RWPE1 (cell line): ENCODE measurements at regions of chr1 and their contacts with region 1.

Region 1: DNA sequence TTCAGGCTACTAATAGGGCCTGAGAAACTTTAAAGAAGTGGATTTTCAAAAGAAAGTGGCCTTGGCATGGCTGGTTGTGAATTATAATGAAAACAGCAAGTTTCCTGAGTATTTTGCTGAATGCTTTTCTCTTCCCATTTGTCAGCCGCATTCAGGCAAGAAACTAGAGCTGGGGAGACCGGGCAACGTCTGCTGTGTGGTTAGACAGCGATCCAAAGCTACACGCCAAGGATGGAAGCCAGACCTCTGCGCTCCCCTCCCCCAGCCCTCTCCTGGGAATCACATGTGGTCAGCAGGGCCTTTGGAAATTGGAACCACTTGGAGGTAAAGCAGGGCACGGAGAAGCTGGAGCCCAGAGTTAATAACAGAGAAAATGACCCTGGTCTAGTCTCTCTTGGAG is 114.1 kb upstream of the CD34 start:
- DNase-seq: no peak
- H3K27ac ChIP-seq: no peak overlapping the region
- CTCF ChIP-seq: no peak

Region 2: GRCh38 chr1:207740224-207740623 is 284.8 kb before region 1 on chr1:
- CTCF ChIA-PET with region 1: interaction called, 10 read pairs
- POLR2A ChIA-PET with region 1: no interaction called
- DNase-seq: peak; percentile 11
- H3K27ac ChIP-seq: no peak overlapping the region
- CTCF ChIP-seq: no peak

Region 3: GRCh38 chr1:208101661-208102431 is 76.8 kb after region 1 on chr1:
- CTCF ChIA-PET with region 1: no interaction called
- POLR2A ChIA-PET with region 1: no interaction called
- DNase-seq: no peak
- H3K27ac ChIP-seq: peak overlapping the region; percentile 15
- CTCF ChIP-seq: no peak

Region 4: DNA sequence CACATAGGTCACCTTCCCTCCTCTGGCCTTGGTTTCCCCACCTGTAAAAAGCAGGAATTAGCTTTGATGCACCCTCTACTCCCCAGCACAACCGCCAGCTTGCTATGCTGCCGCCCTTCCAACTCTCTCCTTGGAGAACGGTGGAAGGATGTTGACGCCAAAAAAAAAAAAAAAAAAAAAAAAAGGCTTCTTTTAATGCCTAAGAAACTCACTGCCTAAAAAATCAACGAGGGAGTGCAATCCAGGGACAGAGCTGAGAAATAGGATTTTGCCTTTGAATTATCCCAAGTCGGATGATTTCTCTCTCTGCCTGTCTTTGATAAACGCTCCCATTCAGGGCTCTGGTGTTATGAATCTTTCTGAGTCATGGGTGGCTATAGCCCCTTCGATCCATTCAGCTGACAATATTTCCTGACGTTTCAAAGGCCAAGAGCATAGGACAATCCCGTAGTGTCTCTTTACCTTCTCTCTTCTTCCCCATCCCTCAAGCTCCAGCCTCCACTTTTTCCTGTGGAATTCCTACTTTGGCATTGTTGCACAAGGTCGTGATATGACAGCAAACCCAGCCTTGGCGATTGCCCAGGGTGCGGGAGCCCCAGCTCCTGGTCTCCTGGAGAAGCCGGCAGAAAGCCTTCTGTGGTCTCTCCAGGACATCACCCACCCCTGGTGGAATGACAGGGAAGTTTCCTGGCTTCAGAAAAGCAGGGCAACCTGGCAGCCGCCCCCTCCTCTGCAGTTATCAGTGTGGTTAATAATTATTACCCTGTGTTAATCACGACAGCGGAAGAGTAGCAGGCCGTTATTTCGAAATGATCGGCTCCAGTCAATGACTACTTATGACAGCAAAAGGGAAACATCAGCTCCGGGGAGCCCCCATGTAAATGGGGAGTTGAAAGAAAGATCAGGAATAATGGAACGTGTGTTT is 227.1 kb after region 1 on chr1:
- CTCF ChIA-PET with region 1: interaction called, 17 read pairs
- POLR2A ChIA-PET with region 1: no interaction called
- DNase-seq: peak; percentile 80
- H3K27ac ChIP-seq: no peak overlapping the region
- CTCF ChIP-seq: peak; percentile 59